ENCODE measurements at regions of chr7 and their contacts with region 1.

Region 1: GRCh38 chr7:12623897-12624498 is 53.5 kb downstream of the SCIN start:
- H3K4me3 Mint-ChIP-seq: no peak overlapping the region
- H3K27ac Mint-ChIP-seq: no peak overlapping the region
- H3K4me1 Mint-ChIP-seq: no peaks in the 10 kb centered on the region
- H3K27me3 Mint-ChIP-seq: no peaks in the 10 kb centered on the region

Region 2: DNA sequence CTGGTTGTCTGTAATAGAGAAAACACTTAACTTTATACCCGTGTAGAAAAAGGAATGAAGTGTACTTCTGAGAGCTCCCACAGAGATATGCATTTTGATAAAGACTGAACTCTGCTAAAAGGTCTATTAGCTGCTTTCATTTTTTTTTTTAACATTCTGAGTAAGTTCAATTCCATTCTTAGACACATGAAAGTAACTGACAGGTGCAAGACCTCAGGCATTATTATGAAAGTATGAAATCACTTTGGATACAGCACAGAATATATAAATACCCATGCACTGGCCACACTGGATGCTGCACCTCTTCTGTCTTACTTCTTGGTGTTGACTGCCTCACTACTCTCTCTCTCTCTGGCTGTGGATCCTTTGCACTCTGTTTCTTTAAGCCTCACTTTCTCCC is 266.5 kb before region 1 on chr7:
- intact Hi-C with region 1: no loop called
- H3K4me3 Mint-ChIP-seq: no peak overlapping the region
- H3K27ac Mint-ChIP-seq: no peak overlapping the region
- H3K4me1 Mint-ChIP-seq: no peaks in the 10 kb centered on the region
- H3K27me3 Mint-ChIP-seq: no peaks in the 10 kb centered on the region

Region 3: GRCh38 chr7:12524794-12525386 is 99.1 kb before region 1 on chr7:
- intact Hi-C with region 1: loop called (anchors 1 kb)
- H3K4me3 Mint-ChIP-seq: no peak overlapping the region
- H3K27ac Mint-ChIP-seq: no peak overlapping the region
- H3K4me1 Mint-ChIP-seq: no peaks in the 10 kb centered on the region
- H3K27me3 Mint-ChIP-seq: peaks cover 2% of the 10 kb centered on the region

Measured in dendritic cell treated with granulocyte-macrophage colony-stimulating factor and Interleukin-4, amounts not matched to agents 40 ng/mL and 50 ng/mL, for 4 days (primary cell).